PC-9 (cell line): ENCODE measurements at regions of chr2 and their contacts with region 1.

Region 1: DNA sequence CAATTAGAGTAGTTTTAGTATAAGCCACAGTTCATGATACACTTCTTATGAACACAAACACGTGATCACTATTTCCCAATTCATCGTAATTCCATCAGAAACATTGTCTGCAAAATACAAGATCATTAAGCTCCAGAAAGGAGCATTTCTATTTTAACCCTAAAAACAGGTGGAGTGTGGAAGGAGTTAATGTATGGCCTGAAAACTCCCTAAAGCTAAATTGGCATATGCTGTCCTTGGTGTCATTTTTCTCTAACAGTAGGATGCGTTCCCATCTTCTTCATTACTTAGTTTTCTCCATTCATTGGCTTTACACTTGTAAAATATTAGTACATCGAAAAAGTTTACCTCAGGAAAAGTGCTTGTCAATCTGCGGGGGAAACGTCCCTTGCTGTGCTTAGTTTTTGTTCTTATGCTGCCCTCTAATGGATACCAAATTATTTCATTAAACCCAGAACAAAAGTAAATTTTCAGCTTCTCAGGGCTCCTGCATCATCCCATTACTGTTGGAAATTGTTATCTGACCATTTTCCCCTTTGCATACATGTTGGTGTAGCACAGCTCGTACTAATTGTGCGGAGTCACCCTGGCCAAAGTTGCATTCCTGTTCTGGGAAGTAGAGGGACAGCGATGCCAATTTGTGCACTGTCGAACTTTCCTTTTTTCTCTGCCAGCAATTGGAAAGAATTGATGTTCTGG is 153.4 kb downstream of the GPD2 start:
- DNase-seq: no peak
- H3K4me3 ChIP-seq: no peak overlapping the region
- H3K27ac ChIP-seq: no peak overlapping the region
- H3K4me1 ChIP-seq: no peaks in the 10 kb centered on the region
- H3K27me3 ChIP-seq: no peaks in the 10 kb centered on the region
- CTCF ChIP-seq: peak; percentile 65

Region 2: DNA sequence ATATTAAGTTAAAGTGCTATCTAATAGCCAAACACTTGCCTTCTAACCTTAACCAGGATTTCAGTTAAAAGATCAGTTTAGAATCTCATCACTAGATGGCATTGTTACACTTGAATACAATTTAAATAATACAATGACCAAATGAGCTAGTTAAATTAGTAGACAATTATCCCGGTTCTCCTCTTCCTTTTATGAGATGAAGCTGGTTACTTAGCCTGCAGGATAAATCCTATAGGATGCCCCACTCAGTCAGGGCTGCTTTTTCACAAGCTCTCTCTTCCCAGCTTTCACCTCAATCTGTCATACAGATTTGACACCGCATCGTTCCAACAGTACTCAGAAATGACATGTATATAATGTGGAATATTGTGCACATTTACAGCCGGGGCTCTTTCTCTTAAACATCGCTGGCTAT is 1212.3 kb before region 1 on chr2:
- CTCF ChIA-PET with region 1: interaction called, 3 read pairs
- POLR2A ChIA-PET with region 1: no interaction called
- intact Hi-C with region 1: loop called (anchors 10 kb)
- DNase-seq: no peak
- H3K4me3 ChIP-seq: no peak overlapping the region
- H3K27ac ChIP-seq: no peak overlapping the region
- H3K4me1 ChIP-seq: no peaks in the 10 kb centered on the region
- H3K27me3 ChIP-seq: no peaks in the 10 kb centered on the region
- CTCF ChIP-seq: peak; percentile 62

Region 3: DNA sequence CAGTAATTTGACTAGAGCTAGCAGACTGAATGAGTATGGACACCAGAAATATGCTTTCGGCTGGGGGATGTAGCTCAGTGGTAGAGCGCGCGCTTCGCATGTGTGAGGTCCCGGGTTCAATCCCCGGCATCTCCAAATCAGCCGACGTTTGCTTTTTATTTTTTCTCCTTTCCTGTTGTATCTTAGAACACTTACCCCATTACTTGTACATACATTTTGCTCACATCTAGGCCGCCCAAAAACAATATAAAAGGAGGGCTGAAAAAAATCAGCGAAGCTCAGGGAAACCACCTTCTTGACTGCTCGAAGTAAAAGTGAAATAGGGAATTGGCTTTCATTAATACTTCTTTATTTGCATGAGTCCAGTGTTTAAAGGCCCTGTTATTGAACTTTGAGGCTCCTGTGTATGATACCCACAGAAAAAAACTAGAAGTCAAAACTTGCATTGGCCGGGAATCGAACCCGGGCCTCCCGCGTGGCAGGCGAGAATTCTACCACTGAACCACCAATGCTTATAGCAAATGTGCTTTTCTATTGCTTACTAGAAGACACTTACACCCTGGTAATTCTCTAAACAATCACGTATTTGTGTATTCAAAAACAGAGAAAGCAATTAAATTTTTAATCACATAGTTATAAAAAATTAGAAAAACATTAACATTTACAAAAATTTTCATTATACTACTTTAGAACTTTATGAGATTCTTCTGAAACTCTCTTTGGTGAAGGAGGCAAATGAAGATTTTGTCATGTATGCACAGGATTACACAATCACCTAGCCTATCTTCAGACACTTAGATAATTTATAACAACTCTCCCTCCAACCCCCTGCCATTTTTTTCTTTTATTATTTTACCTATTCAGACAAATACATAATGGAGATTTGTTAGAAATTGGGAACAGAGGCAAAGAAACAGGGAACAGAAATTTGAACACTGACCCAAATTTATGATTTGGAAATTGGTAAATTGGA is 188.5 kb before region 1 on chr2:
- CTCF ChIA-PET with region 1: no interaction called
- POLR2A ChIA-PET with region 1: no interaction called
- intact Hi-C with region 1: loop called (anchors 2 kb)
- DNase-seq: peak; percentile 60 to 63
- H3K4me3 ChIP-seq: peak overlapping the region; percentile 84
- H3K27ac ChIP-seq: peak overlapping the region; percentile 83
- H3K4me1 ChIP-seq: peaks cover 26% of the 10 kb centered on the region
- H3K27me3 ChIP-seq: no peaks in the 10 kb centered on the region
- CTCF ChIP-seq: no peak

Region 4: DNA sequence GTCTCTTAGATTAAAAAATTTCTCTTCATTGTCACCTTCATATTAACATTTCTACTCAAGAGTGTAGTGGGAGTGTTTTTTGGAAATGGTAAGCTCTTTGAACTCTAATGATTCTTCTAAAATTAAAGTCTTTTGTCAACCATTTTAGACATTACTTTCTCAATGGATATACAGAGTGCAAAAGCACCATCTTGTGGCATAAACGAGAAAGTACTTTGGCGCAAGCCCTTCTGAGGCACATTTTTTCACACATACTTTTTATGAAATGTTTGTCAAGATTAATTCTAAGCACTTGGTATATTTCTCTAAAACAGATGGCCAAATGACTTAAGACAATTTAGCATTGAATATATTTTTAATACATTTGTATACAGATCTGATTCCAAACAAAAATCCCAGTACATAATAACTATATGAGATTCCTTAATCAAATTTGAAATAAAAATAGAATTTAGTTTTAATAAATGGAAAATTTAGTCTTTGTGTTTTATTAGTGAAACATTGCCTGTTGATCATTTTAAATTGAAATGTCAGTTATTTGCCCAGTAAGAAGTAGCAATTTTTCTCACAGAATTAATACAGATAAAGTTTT is 604.7 kb after region 1 on chr2:
- CTCF ChIA-PET with region 1: no interaction called
- POLR2A ChIA-PET with region 1: no interaction called
- intact Hi-C with region 1: loop called (anchors 5 kb)
- DNase-seq: peak in 1 of 2 experiments; percentile 3
- H3K4me3 ChIP-seq: no peak overlapping the region
- H3K27ac ChIP-seq: no peak overlapping the region
- H3K4me1 ChIP-seq: no peaks in the 10 kb centered on the region
- H3K27me3 ChIP-seq: no peaks in the 10 kb centered on the region
- CTCF ChIP-seq: peak; percentile 73